ENCODE measurements at regions of chr13 and their contacts with region 1.

Region 1: GRCh38 chr13:46721054-46721453 is 75.9 kb downstream of the ESD start:
- DNase-seq: peak; percentile 47 to 69 (median 54)
- ATAC-seq: peak; percentile 63
- H3K4me3 ChIP-seq: no peak overlapping the region
- H3K27ac ChIP-seq: no peak overlapping the region
- H3K4me1 ChIP-seq: no peaks in the 10 kb centered on the region
- H3K27me3 ChIP-seq: no peaks in the 10 kb centered on the region
- CTCF ChIP-seq: peak; percentile 46 to 82 (median 79)
- POLR2A ChIP-seq: no peak

Region 2: DNA sequence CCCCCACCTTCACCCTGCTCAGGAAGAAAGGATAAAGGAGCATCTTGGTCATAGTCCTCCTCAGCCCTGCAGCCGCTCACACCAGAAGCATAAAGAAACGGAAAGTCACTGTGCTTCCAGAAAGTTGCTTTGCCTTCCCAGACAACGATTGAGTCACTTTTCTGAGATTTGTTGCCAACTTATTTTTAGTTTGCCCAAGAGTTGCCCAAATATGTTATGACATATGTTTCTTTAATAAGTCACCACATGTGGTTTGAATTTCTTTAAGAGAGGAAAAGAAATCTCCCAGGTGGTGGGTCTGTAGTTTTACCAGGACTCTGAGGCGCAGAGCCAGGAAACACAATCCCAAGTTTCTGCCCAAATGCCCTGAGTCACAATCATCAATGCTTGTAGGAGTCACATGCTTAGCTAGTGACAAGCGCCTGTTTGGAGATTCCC is 231.4 kb before region 1 on chr13:
- intact Hi-C with region 1: loop called (anchors 5 kb)
- DNase-seq: no peak
- ATAC-seq: no peak
- H3K4me3 ChIP-seq: no peak overlapping the region
- H3K27ac ChIP-seq: no peak overlapping the region
- H3K4me1 ChIP-seq: no peaks in the 10 kb centered on the region
- H3K27me3 ChIP-seq: no peaks in the 10 kb centered on the region
- CTCF ChIP-seq: no peak
- POLR2A ChIP-seq: no peak

Region 3: GRCh38 chr13:46546089-46546797 is 174.8 kb before region 1 on chr13:
- intact Hi-C with region 1: loop called (anchors 5 kb)
- DNase-seq: no peak
- ATAC-seq: no peak
- H3K4me3 ChIP-seq: no peak overlapping the region
- H3K27ac ChIP-seq: no peak overlapping the region
- H3K4me1 ChIP-seq: peaks cover 1% of the 10 kb centered on the region
- H3K27me3 ChIP-seq: no peaks in the 10 kb centered on the region
- CTCF ChIP-seq: no peak
- POLR2A ChIP-seq: no peak